ENCODE measurements at regions of chr1 and their contacts with region 1.

Region 1: GRCh38 chr1:59007820-59008598 is 224.2 kb upstream of the JUN start:
- DNase-seq: peak; percentile 7
- H3K4me3 Mint-ChIP-seq: peak overlapping the region; percentile 52
- H3K27ac Mint-ChIP-seq: peak overlapping the region; percentile 94
- H3K4me1 Mint-ChIP-seq: peaks cover 90% of the 10 kb centered on the region
- H3K27me3 Mint-ChIP-seq: no peaks in the 10 kb centered on the region

Region 2: GRCh38 chr1:58816072-58816746 is 191.8 kb before region 1 on chr1:
- intact Hi-C with region 1: loop called (anchors 2 kb)
- DNase-seq: peak; percentile 83
- H3K4me3 Mint-ChIP-seq: peak overlapping the region; percentile 83
- H3K27ac Mint-ChIP-seq: peak overlapping the region; percentile 86
- H3K4me1 Mint-ChIP-seq: peaks cover 56% of the 10 kb centered on the region
- H3K27me3 Mint-ChIP-seq: peaks cover 2% of the 10 kb centered on the region

Region 3: GRCh38 chr1:58903514-58904298 is 104.3 kb before region 1 on chr1:
- intact Hi-C with region 1: loop called (anchors 1 kb)
- DNase-seq: peak; percentile 81
- H3K4me3 Mint-ChIP-seq: peak overlapping the region; percentile 76
- H3K27ac Mint-ChIP-seq: peak overlapping the region; percentile 87
- H3K4me1 Mint-ChIP-seq: peaks cover 32% of the 10 kb centered on the region
- H3K27me3 Mint-ChIP-seq: no peaks in the 10 kb centered on the region

Region 4: DNA sequence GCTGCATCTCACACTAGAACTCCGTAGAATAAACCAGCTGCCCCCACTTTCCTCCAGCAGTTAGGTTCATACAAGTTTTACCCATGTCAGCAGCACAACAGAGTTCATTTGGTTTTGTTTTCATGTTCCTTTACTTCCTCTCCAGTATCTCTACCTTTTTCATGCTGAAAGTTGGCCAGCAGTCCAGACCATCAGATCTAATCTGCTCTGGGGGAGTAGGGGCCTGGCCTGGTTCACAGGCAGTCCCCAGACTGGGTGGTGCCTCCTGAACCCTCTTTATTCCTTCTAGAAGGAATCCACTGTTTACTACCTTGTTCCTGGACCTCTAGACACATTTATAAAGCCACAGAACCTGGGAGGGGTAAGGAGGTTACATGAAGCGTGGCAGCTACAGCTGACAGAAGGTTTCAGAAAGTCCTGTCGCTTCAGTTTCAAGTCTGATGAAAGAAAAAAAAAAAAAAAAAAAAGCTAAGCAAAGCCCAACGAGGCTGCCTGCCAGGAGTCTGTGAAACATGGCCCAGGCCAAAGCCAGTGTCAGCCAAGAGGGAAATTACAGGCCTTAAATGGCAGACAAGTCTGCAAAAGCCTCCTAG is 39.6 kb before region 1 on chr1:
- intact Hi-C with region 1: loop called (anchors 1 kb)
- DNase-seq: peak; percentile 42
- H3K4me3 Mint-ChIP-seq: peak overlapping the region; percentile 77
- H3K27ac Mint-ChIP-seq: peak overlapping the region; percentile 98
- H3K4me1 Mint-ChIP-seq: peaks cover 76% of the 10 kb centered on the region
- H3K27me3 Mint-ChIP-seq: no peaks in the 10 kb centered on the region

Region 5: DNA sequence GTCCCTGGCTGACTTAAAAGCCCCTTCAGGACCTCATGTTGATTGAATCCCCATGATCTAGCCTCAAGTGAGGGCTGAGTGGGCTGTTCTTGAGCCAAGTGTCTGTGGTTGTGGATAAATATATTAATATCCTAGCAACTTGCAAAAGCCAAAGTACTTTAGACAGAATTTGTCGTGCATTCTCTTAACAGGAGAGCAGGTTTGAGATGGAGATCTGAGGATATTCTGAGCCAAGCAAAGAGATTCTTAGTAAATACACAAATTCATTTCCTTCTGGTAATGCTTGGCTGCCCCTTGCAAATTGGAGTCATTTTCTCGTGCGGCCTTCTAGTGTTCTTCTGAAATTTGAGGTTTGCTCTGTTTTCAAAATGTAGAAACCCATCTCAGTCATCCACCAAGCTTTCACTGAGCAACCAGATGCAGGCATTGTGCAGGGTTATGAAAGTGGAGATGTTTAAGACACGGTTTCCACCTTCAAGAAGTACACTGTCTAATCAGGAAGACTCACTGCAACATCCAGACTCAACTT is 18.0 kb after region 1 on chr1:
- intact Hi-C with region 1: loop called (anchors 1 kb)
- DNase-seq: no peak
- H3K4me3 Mint-ChIP-seq: no peak overlapping the region
- H3K27ac Mint-ChIP-seq: no peak overlapping the region
- H3K4me1 Mint-ChIP-seq: peaks cover 17% of the 10 kb centered on the region
- H3K27me3 Mint-ChIP-seq: no peaks in the 10 kb centered on the region

Region 6: GRCh38 chr1:59296358-59297256 is 288.6 kb after region 1 on chr1 and contains the start of gene FGGY:
- intact Hi-C with region 1: loop called (anchors 2 kb)
- DNase-seq: peak; percentile 86
- H3K4me3 Mint-ChIP-seq: peak within 1 kb of the TSS; percentile 91
- H3K27ac Mint-ChIP-seq: peak within 1 kb of the TSS; percentile 91
- H3K4me1 Mint-ChIP-seq: peaks cover 48% of the 10 kb centered on the region
- H3K27me3 Mint-ChIP-seq: no peaks in the 10 kb centered on the region
- total RNA-seq, gene FGGY: 7.1 and 8.2 TPM in 2 replicates

Region 7: GRCh38 chr1:59477286-59477685 is 469.3 kb after region 1 on chr1:
- intact Hi-C with region 1: loop called (anchors 5 kb)
- DNase-seq: peak; percentile 30
- H3K4me3 Mint-ChIP-seq: peak overlapping the region; percentile 15
- H3K27ac Mint-ChIP-seq: peak overlapping the region; percentile 84
- H3K4me1 Mint-ChIP-seq: peaks cover 9% of the 10 kb centered on the region
- H3K27me3 Mint-ChIP-seq: no peaks in the 10 kb centered on the region

Measured in activated T-helper 1 cell treated with anti-CD3 and anti-CD28 coated beads, Interleukin-12 subunit alpha, Interleukin-12 subunit beta, Interleukin-2, Interleukin-4 antibody, amounts not matched to agents 30 ng/mL and 10 ng/mL and 1 ng/mL, durations not matched to agents 14 hours and 24 hours and 36 hours (primary cell).